Activated CD8-positive, alpha-beta memory T cell treated with anti-CD3 and anti-CD28 coated beads, Interleukin-2, amount 10 ng/mL, durations not matched to agents 7 days and 5 days (primary cell): ENCODE measurements at regions of chr12 and their contacts with region 1.

Region 1: DNA sequence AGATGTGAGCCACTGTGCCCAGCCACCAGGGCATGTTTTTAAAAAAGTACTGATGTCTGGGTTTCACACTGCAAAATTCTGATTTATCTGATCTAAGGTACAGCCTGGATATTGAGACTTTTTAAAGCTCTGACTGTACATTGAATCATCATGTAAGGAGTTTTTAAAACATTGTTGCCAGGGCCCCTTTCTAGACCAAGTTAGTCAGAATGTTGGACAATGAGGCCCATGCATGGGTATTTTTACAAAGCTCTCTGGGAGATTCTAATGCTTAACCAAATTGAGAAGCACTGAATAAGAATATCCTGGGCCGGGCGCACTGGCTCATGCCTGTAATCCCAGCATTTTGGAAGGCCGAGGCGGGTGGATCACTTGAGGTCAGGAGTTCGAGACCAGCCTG is 16.7 kb downstream of the TMEM19 start:
- DNase-seq: no peak
- ATAC-seq: no peak
- H3K4me3 Mint-ChIP-seq: no peak overlapping the region
- H3K27ac Mint-ChIP-seq: no peak overlapping the region
- H3K4me1 Mint-ChIP-seq: no peaks in the 10 kb centered on the region
- H3K27me3 Mint-ChIP-seq: no peaks in the 10 kb centered on the region

Region 2: DNA sequence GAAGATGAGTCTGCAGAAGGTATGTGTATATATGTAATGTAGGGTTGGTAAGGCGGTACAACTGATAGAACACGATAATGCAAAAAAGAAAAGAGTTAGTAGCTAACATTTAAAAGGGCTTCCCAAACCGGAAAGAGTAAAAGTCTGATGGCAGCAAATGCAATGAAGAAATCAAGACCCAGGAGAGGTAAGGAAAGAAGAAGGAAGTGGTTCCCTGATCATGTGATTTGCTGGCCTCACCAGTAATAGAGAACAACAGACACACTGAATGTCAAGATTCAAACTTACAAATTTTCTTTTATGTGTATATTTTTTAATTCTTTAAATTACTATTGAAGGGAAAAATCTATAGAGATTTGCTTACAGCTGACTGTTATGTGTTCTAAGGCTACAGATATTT is 57.3 kb before region 1 on chr12:
- CTCF ChIA-PET with region 1: no interaction called
- DNase-seq: no peak
- ATAC-seq: no peak
- H3K4me3 Mint-ChIP-seq: no peak overlapping the region
- H3K27ac Mint-ChIP-seq: no peak overlapping the region
- H3K4me1 Mint-ChIP-seq: peaks cover 35% of the 10 kb centered on the region
- H3K27me3 Mint-ChIP-seq: no peaks in the 10 kb centered on the region

Region 3: GRCh38 chr12:71685914-71686665 is 16.5 kb before region 1 on chr12 and contains the start of gene TMEM19:
- CTCF ChIA-PET with region 1: interaction called, 11 read pairs
- DNase-seq: peak; percentile 88
- ATAC-seq: peak; percentile 96
- H3K4me3 Mint-ChIP-seq: peak within 1 kb of the TSS; percentile 93
- H3K27ac Mint-ChIP-seq: peak within 1 kb of the TSS; percentile 97
- H3K4me1 Mint-ChIP-seq: peaks cover 31% of the 10 kb centered on the region
- H3K27me3 Mint-ChIP-seq: no peaks in the 10 kb centered on the region
- total RNA-seq, gene TMEM19: 16.5 to 16.6 TPM

Region 4: GRCh38 chr12:71719615-71720370 is 17.2 kb after region 1 on chr12:
- CTCF ChIA-PET with region 1: no interaction called
- DNase-seq: no peak
- ATAC-seq: no peak
- H3K4me3 Mint-ChIP-seq: no peak overlapping the region
- H3K27ac Mint-ChIP-seq: no peak overlapping the region
- H3K4me1 Mint-ChIP-seq: no peaks in the 10 kb centered on the region
- H3K27me3 Mint-ChIP-seq: peaks cover 3% of the 10 kb centered on the region

Region 5: DNA sequence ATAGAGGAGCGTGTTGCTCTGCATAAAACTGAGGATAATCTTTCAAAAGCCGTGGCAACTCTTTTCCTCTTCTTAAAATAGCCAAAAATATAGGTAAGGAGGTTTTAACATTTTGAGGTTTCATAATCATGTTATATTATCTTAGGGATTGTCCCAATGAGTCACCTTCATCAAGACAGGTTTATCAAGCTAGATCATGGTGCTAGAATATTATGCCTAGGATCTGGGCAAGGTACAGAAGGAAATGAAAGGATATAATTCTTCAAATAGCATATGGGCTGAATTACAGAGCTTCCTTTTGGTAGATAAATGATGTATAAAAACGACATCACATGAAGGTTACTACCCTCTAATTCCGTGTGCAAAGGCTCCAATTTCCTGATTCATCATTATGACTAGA is 108.3 kb after region 1 on chr12:
- CTCF ChIA-PET with region 1: no interaction called
- DNase-seq: no peak
- ATAC-seq: no peak
- H3K4me3 Mint-ChIP-seq: no peak overlapping the region
- H3K27ac Mint-ChIP-seq: no peak overlapping the region
- H3K4me1 Mint-ChIP-seq: no peaks in the 10 kb centered on the region
- H3K27me3 Mint-ChIP-seq: peaks cover 45% of the 10 kb centered on the region

Region 6: DNA sequence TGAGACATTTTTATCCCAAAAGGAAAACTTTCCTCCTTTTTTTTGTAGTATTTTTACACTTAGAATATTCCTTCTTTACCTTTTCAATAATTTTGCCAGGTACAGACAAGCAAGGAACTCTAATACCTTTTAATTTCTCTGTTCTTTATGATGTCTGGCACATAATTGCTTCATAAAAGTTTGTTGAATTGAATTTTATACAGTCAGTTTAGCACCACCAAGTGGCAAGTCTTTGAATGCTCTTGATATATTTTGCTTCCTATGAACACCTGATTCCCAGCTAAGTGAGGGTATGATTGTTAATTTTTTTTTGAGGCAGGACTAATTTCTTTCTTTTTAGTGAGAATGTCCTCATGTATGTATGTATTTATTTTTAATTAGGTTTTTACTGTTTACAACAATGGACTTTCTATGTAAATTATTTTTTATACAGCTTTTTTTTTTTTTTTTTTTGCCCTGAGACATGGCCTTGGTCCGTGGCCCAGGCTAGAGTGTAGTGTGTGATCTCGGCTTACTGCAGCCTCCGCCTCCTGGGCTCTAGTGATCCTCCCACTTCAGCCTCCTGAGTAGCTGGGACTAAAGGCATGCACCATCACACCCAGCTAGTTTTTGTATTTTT is 143.8 kb after region 1 on chr12:
- CTCF ChIA-PET with region 1: no interaction called
- DNase-seq: no peak
- ATAC-seq: peak; percentile 53
- H3K4me3 Mint-ChIP-seq: no peak overlapping the region
- H3K27ac Mint-ChIP-seq: no peak overlapping the region
- H3K4me1 Mint-ChIP-seq: peaks cover 16% of the 10 kb centered on the region
- H3K27me3 Mint-ChIP-seq: no peaks in the 10 kb centered on the region